BJ (cell line): ENCODE measurements at regions of chr3 and their contacts with region 1.

Region 1: GRCh38 chr3:51974963-51975851 is at the start of gene ABHD14A:
- DNase-seq: no peak
- H3K4me3 ChIP-seq: peak within 1 kb of the TSS; percentile 52
- H3K27me3 ChIP-seq: no peaks in the 10 kb centered on the region
- CTCF ChIP-seq: no peak
- polyA plus RNA-seq, gene ABHD14A: 10.7 and 16.5 TPM in 2 replicates

Region 2: GRCh38 chr3:51921081-51921578 is 54.1 kb before region 1 on chr3:
- CTCF ChIA-PET with region 1: no interaction called
- POLR2A ChIA-PET with region 1: no interaction called
- DNase-seq: no peak
- H3K4me3 ChIP-seq: no peak overlapping the region
- H3K27me3 ChIP-seq: no peaks in the 10 kb centered on the region
- CTCF ChIP-seq: no peak

Region 3: GRCh38 chr3:51955893-51956770 is 19.1 kb before region 1 on chr3:
- CTCF ChIA-PET with region 1: interaction called, 37 read pairs
- POLR2A ChIA-PET with region 1: interaction called, 3 read pairs
- DNase-seq: no peak
- H3K4me3 ChIP-seq: no peak overlapping the region
- H3K27me3 ChIP-seq: no peaks in the 10 kb centered on the region
- CTCF ChIP-seq: peak; percentile 53

Region 4: DNA sequence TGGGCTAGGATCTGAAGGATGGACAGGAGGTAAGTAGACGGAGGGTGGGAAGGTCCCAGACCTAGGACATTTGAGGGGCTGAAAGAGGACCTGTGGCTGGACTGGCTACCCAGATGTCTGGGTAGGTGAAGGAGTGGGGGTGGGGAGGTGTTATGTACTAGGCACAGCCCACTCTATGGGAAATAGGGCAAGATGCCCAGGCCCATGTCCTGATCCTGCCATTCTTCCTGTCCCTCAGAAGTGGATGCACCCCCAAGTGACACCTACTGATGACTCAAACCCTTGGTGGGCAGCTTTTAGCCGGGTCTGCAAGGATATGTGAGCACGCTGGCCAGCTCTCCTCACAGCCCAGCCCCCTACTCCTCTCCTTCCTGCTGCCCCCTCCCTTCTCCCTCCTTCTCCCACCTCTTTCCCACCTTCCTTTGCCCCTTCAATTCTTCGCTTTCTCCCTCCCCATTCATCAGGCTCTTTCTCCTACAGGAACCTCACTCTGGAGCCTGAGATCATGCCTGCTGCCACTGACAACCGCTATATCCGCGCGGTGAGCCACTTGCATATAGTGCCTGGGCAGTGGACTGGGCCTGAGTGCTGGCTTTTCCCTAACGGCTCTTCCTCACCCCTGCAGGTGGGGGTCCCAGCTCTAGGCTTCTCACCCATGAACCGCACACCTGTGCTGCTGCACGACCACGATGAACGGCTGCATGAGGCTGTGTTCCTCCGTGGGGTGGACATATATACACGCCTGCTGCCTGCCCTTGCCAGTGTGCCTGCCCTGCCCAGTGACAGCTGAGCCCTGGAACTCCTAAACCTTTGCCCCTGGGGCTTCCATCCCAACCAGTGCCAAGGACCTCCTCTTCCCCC is 13.3 kb after region 1 on chr3:
- CTCF ChIA-PET with region 1: interaction called, 42 read pairs
- POLR2A ChIA-PET with region 1: no interaction called
- DNase-seq: no peak
- H3K4me3 ChIP-seq: no peak overlapping the region
- H3K27me3 ChIP-seq: no peaks in the 10 kb centered on the region
- CTCF ChIP-seq: no peak

Region 5: GRCh38 chr3:52238761-52239701 is 263.8 kb after region 1 on chr3 and contains the start of gene TWF2:
- CTCF ChIA-PET with region 1: no interaction called
- POLR2A ChIA-PET with region 1: no interaction called
- DNase-seq: no peak
- H3K4me3 ChIP-seq: peak within 1 kb of the TSS; percentile 90
- H3K27me3 ChIP-seq: no peaks in the 10 kb centered on the region
- CTCF ChIP-seq: peak; percentile 49
- polyA plus RNA-seq, gene TWF2: 109 and 205 TPM in 2 replicates